T-cell (primary cell): ENCODE measurements at regions of chr20 and their contacts with region 1.

Region 1: GRCh38 chr20:6418732-6419131 is 295.9 kb upstream of the FERMT1 start:
- DNase-seq: no peak
- ATAC-seq: no peak
- H3K4me3 ChIP-seq: no peak overlapping the region
- H3K4me3 Mint-ChIP-seq: no peak overlapping the region
- H3K27ac ChIP-seq: no peak overlapping the region
- H3K27ac Mint-ChIP-seq: no peak overlapping the region
- H3K4me1 ChIP-seq: no peaks in the 10 kb centered on the region
- H3K4me1 Mint-ChIP-seq: no peaks in the 10 kb centered on the region
- H3K27me3 ChIP-seq: no peaks in the 10 kb centered on the region
- H3K27me3 Mint-ChIP-seq: peaks cover 0 to 4% of the 10 kb centered on the region in 2 donors

Region 2: GRCh38 chr20:6401893-6402557 is 16.7 kb before region 1 on chr20:
- CTCF ChIA-PET with region 1: no interaction called
- POLR2A ChIA-PET with region 1: no interaction called
- DNase-seq: no peak
- ATAC-seq: no peak
- H3K4me3 ChIP-seq: no peak overlapping the region
- H3K4me3 Mint-ChIP-seq: no peak overlapping the region
- H3K27ac ChIP-seq: no peak overlapping the region
- H3K27ac Mint-ChIP-seq: no peak overlapping the region
- H3K4me1 ChIP-seq: no peaks in the 10 kb centered on the region
- H3K4me1 Mint-ChIP-seq: no peaks in the 10 kb centered on the region
- H3K27me3 ChIP-seq: no peaks in the 10 kb centered on the region
- H3K27me3 Mint-ChIP-seq: no peaks in the 10 kb centered on the region

Region 3: GRCh38 chr20:7031222-7031621 is 612.5 kb after region 1 on chr20:
- CTCF ChIA-PET with region 1: interaction called in 1 of 2 experiments, 10 read pairs
- POLR2A ChIA-PET with region 1: no interaction called
- DNase-seq: no peak
- ATAC-seq: no peak
- H3K4me3 ChIP-seq: no peak overlapping the region
- H3K4me3 Mint-ChIP-seq: no peak overlapping the region
- H3K27ac ChIP-seq: no peak overlapping the region
- H3K27ac Mint-ChIP-seq: no peak overlapping the region
- H3K4me1 ChIP-seq: no peaks in the 10 kb centered on the region
- H3K4me1 Mint-ChIP-seq: no peaks in the 10 kb centered on the region
- H3K27me3 ChIP-seq: no peaks in the 10 kb centered on the region
- H3K27me3 Mint-ChIP-seq: no peaks in the 10 kb centered on the region